A549 (cell line): ENCODE measurements at regions of chr2 and their contacts with region 1.

Region 1: GRCh38 chr2:209423562-209424198 is at the start of gene MAP2:
- DNase-seq: peak; percentile 55 to 77
- ATAC-seq: peak; percentile 95 to 98
- H3K4me3 ChIP-seq: peak within 1 kb of the TSS; percentile 71
- H3K27ac ChIP-seq: peak within 1 kb of the TSS; percentile 68 to 85; a peak in 5 of 6 replicates
- H3K4me1 ChIP-seq: peaks cover 21% of the 10 kb centered on the region; the same call in 2 of the 3 replicates
- CTCF ChIP-seq: peak; percentile 98
- EP300 ChIP-seq: no peak
- POLR2A ChIP-seq: no peak; the same call in 1 of the 2 replicates
- RAD21 ChIP-seq: peak; percentile 46 to 90; a peak in 4 of 5 replicates
- polyA plus RNA-seq, gene MAP2: 1.8 and 2.2 TPM in 2 replicates

Region 2: DNA sequence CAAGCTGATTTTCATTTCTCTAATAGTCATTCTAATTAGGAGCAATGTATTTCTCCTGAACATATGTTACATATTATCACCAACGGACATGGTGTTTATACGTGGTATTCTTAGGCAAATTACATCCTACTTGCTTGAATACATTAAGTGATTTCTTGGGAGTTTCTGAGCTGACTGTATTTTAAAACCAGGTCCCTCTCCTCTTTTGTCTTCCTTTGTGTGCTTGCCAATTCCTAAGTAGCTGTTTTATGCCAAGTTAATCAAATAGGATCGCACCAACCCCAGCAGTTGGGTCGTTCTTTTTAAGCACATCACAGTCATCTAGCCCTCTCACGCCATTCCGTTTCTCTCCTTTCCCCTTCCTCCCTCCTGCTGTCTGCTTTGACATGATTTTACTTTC is 75.2 kb before region 1 on chr2:
- CTCF ChIA-PET with region 1: interaction called, 14 read pairs
- POLR2A ChIA-PET with region 1: no interaction called
- DNase-seq: no peak
- ATAC-seq: no peak
- H3K4me3 ChIP-seq: no peak overlapping the region
- H3K27ac ChIP-seq: no peak overlapping the region
- H3K4me1 ChIP-seq: no peaks in the 10 kb centered on the region
- CTCF ChIP-seq: no peak
- EP300 ChIP-seq: no peak
- POLR2A ChIP-seq: no peak
- RAD21 ChIP-seq: no peak

Region 3: GRCh38 chr2:209389171-209389618 is 34.5 kb before region 1 on chr2:
- CTCF ChIA-PET with region 1: interaction called, 11 read pairs
- POLR2A ChIA-PET with region 1: no interaction called
- DNase-seq: no peak
- ATAC-seq: no peak
- H3K4me3 ChIP-seq: no peak overlapping the region
- H3K27ac ChIP-seq: no peak overlapping the region
- H3K4me1 ChIP-seq: peaks cover 13% of the 10 kb centered on the region; the same call in 2 of the 3 replicates
- CTCF ChIP-seq: no peak
- EP300 ChIP-seq: no peak
- POLR2A ChIP-seq: no peak
- RAD21 ChIP-seq: no peak

Region 4: DNA sequence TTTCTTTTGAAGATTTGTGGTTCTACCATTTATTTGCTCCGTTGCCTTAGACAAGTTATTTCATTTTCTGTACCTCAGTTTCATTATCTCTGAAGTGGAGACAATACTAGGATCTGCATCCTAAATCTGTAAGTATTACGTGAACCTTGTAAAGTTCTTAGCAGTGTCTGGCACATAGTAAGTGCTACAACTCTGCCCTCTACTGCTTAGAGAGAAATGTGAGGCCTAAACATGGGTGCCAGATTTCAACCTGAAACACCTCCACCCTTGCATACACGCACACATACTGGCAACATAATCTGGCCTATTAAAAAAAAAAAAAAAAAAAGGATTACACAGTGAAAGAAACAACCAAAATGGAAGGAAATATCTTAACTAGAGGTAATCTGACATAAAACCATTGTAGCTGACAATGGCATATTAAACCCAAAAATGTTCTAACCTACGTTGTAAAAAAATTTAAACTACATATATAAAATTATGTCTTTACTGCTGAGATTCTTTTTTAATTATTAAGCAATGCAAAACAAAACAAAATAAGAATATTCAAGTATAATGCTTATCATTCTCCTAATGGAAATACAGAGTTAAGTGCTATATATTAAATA is 132.8 kb after region 1 on chr2:
- CTCF ChIA-PET with region 1: interaction called, 67 read pairs
- POLR2A ChIA-PET with region 1: interaction called, 3 read pairs
- DNase-seq: peak; percentile 8 to 57
- ATAC-seq: peak; percentile 90 to 93; a peak in 5 of 6 replicates
- H3K4me3 ChIP-seq: no peak overlapping the region
- H3K27ac ChIP-seq: no peak overlapping the region; a peak in 1 of 6 replicates
- H3K4me1 ChIP-seq: no peaks in the 10 kb centered on the region
- CTCF ChIP-seq: peak; percentile 71
- EP300 ChIP-seq: no peak
- POLR2A ChIP-seq: no peak
- RAD21 ChIP-seq: peak; percentile 78 to 83

Region 5: DNA sequence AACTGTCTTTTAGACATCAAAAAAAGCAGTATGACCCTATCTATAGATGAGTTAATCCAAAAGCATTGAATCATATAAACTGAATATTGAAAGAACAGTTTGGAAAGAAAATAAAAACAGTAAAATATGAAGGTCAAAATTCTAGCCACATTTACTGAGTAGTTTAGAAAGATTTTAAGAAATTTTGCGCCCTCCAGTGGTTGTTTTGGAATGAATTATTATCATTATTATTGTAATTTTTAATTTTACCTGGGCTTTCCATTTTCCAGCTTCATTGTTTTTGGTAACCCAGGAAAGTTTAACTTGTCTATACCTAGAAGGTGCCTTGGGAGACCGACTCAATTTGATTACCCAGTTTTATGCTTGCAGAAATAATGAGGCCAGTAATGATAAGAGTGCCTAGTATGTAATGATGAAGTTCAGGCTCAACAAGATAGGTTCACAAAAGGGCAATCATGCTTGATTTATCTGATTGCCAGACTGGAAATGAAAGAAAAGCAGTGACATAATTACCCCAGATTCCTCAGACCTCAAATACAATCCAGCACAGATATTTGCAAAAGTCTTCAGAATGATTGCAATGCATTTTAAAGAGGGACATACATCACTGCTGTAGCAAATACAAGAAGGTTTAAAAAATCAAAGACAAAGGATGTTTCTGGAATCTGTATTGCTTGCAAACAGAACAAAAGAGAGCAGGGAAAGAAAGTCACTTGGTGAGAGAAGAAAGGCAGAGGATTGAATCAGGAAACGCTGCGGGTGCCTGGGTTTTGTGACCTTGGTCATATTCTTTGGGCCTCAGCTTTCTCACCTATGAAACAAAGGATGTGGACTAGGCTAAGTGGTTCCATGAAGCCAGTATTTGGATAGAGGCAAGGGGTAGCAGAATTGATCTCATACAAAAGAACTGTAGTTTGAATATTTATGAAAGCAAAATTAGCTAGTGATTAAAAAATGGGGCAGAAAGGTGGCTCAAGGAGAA is 154.0 kb after region 1 on chr2:
- CTCF ChIA-PET with region 1: interaction called, 13 read pairs
- POLR2A ChIA-PET with region 1: no interaction called
- DNase-seq: peak in 1 of 2 experiments; percentile 12
- ATAC-seq: no peak
- H3K4me3 ChIP-seq: no peak overlapping the region
- H3K27ac ChIP-seq: no peak overlapping the region
- H3K4me1 ChIP-seq: no peaks in the 10 kb centered on the region
- CTCF ChIP-seq: peak; percentile 61
- EP300 ChIP-seq: no peak
- POLR2A ChIP-seq: no peak
- RAD21 ChIP-seq: peak; percentile 47 to 65